Activated B cell treated with CpG ODN at 0.5 μM for 24 hours (primary cell): ENCODE measurements at regions of chr11 and their contacts with region 1.

Region 1: DNA sequence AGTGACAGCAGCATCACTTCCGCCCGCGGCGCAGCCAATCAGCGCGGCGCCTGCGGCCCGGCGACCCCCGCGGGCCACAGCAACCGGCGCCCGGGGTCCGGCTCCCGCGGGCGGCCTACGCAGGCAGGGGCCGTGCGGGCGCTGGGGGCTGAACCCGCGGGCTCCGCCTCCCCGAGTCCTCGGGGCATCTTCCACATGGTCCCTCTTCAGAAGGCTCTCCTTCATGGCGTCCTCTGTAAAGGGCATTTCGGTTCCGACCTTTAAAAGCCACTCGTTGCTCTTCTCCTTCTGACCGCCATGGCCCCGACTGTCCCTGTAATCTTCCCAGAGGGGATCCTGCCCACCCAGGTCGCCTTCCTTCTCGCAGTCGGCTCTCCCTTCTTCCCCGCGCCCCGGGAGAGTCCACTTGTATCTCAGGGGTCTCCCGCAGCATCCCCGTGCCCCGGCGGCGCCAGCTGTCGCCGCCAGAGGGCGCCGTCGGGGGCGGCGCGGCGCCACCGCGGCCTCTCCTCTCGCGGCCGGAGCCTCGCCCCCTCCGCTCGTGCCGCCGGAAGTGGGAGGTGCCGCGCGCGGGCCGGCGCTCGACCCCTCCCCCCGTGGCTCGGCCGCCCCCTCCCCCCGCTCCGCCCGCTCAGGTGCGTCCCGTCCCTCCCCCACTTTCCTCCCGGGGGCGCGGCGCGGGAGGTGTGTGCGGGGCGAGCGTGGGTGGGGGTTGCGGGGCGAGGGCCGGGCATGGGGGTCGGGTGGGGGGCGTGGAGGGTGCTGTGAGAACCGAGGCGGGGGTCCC is at the start of gene RNF214:
- DNase-seq: peak; percentile 82
- ATAC-seq: peak; percentile 74
- H3K4me3 Mint-ChIP-seq: peak within 1 kb of the TSS; percentile 100
- H3K27ac Mint-ChIP-seq: peak within 1 kb of the TSS; percentile 100
- H3K4me1 Mint-ChIP-seq: peaks cover 43% of the 10 kb centered on the region
- H3K27me3 Mint-ChIP-seq: no peaks in the 10 kb centered on the region
- CTCF ChIP-seq: peak; percentile 69
- total RNA-seq, gene RNF214: 18.7 and 22.3 TPM in 2 replicates

Region 2: GRCh38 chr11:116927163-116927974 is 304.9 kb before region 1 on chr11:
- CTCF ChIA-PET with region 1: interaction called, 3 read pairs
- POLR2A ChIA-PET with region 1: interaction called, 8 read pairs
- intact Hi-C with region 1: loop called (anchors 5 kb)
- DNase-seq: no peak
- ATAC-seq: peak; percentile 40
- H3K4me3 Mint-ChIP-seq: peak overlapping the region; percentile 50
- H3K27ac Mint-ChIP-seq: peak overlapping the region; percentile 88
- H3K4me1 Mint-ChIP-seq: peaks cover 91% of the 10 kb centered on the region
- H3K27me3 Mint-ChIP-seq: no peaks in the 10 kb centered on the region
- CTCF ChIP-seq: no peak

Region 3: GRCh38 chr11:117143871-117144476 is 88.3 kb before region 1 on chr11 and contains the start of gene PAFAH1B2:
- CTCF ChIA-PET with region 1: interaction called, 13 read pairs
- POLR2A ChIA-PET with region 1: interaction called, 55 read pairs
- intact Hi-C with region 1: loop called (anchors 1 kb)
- DNase-seq: peak; percentile 95
- ATAC-seq: peak; percentile 84
- H3K4me3 Mint-ChIP-seq: peak within 1 kb of the TSS; percentile 95
- H3K27ac Mint-ChIP-seq: peak within 1 kb of the TSS; percentile 95
- H3K4me1 Mint-ChIP-seq: peaks cover 40% of the 10 kb centered on the region
- H3K27me3 Mint-ChIP-seq: peaks cover 5% of the 10 kb centered on the region
- CTCF ChIP-seq: no peak
- total RNA-seq, gene PAFAH1B2: 71.3 and 78.7 TPM in 2 replicates

Region 4: DNA sequence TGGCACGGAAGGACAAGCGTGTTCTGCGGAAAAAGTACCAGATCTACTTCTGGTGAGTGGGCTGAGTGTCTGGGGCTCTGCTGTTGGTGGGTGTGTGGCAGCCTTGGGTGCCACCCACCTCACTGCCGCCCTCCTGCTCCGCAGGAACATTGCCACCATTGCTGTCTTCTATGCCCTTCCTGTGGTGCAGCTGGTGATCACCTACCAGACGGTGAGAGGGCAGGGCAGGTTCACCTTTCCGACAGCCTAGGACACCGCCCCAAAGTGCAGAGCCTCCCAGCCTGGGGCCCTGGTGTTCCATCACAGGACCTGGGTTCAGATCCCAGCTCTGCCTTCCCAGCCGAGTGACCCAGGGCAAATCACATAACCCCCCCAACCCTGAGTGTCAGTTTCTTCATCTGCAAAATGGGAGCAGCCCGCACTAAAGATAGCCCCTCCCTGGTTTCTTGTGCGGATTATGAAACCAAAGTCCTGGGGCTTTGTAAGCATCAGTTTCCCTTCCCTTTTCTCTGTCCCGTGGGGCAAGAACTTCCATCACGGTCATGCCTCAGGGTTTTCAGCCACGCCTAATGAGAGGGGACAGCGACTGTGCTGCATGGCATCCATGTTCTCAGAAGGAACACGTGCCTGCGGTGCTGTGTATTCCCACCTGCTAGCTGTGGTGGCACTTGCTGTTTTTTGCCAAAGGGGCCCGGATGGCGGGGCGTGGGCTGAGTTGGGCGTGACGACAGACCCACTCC is 42.9 kb before region 1 on chr11:
- CTCF ChIA-PET with region 1: interaction called, 4 read pairs
- POLR2A ChIA-PET with region 1: interaction called, 21 read pairs
- intact Hi-C with region 1: loop called (anchors 1 kb)
- DNase-seq: peak; percentile 66
- ATAC-seq: peak; percentile 87
- H3K4me3 Mint-ChIP-seq: peak overlapping the region; percentile 74
- H3K27ac Mint-ChIP-seq: peak overlapping the region; percentile 94
- H3K4me1 Mint-ChIP-seq: peaks cover 78% of the 10 kb centered on the region
- H3K27me3 Mint-ChIP-seq: no peaks in the 10 kb centered on the region
- CTCF ChIP-seq: no peak

Region 5: GRCh38 chr11:118002541-118003423 is 770.5 kb after region 1 on chr11:
- CTCF ChIA-PET with region 1: no interaction called
- POLR2A ChIA-PET with region 1: no interaction called
- intact Hi-C with region 1: loop called (anchors 5 kb)
- DNase-seq: no peak
- ATAC-seq: peak; percentile 21
- H3K4me3 Mint-ChIP-seq: peak overlapping the region; percentile 52
- H3K27ac Mint-ChIP-seq: peak overlapping the region; percentile 98
- H3K4me1 Mint-ChIP-seq: peaks cover 93% of the 10 kb centered on the region
- H3K27me3 Mint-ChIP-seq: no peaks in the 10 kb centered on the region
- CTCF ChIP-seq: no peak